ENCODE measurements at regions of chr12 and their contacts with region 1.

Region 1: GRCh38 chr12:52378091-52378490 is 7.4 kb downstream of the KRT84 start:
- DNase-seq: no peak
- H3K4me3 ChIP-seq: no peak overlapping the region
- H3K27ac ChIP-seq: no peak overlapping the region
- H3K4me1 ChIP-seq: no peaks in the 10 kb centered on the region
- H3K27me3 ChIP-seq: no peaks in the 10 kb centered on the region
- CTCF ChIP-seq: no peak
- POLR2A ChIP-seq: no peak

Region 2: GRCh38 chr12:52004042-52004648 is 373.9 kb before region 1 on chr12:
- intact Hi-C with region 1: no loop called
- DNase-seq: peak; percentile 56 to 59
- H3K4me3 ChIP-seq: no peak overlapping the region
- H3K27ac ChIP-seq: no peak overlapping the region
- H3K4me1 ChIP-seq: peaks cover 7 to 10% of the 10 kb centered on the region in 2 donors
- H3K27me3 ChIP-seq: no peaks in the 10 kb centered on the region
- CTCF ChIP-seq: peak; percentile 22 to 64 (median 50)
- POLR2A ChIP-seq: no peak

Region 3: GRCh38 chr12:52879394-52880351 is 501.6 kb after region 1 on chr12:
- intact Hi-C with region 1: loop called (anchors 5 kb)
- DNase-seq: peak; percentile 79 to 81
- H3K4me3 ChIP-seq: no peak overlapping the region
- H3K27ac ChIP-seq: peak overlapping the region; percentile 32 to 50 (median 48)
- H3K4me1 ChIP-seq: peaks cover 22 to 43% of the 10 kb centered on the region in 2 donors
- H3K27me3 ChIP-seq: no peaks in the 10 kb centered on the region
- CTCF ChIP-seq: peak in 5 of 6 experiments; percentile 49 to 93 (median 84)
- POLR2A ChIP-seq: no peak